Lower leg skin (tissue), 4 donors: ENCODE measurements at regions of chr4 and their contacts with region 1.

Region 1: GRCh38 chr4:188021548-188022249 is 26.1 kb downstream of the ZFP42 start:
- DNase-seq: no peak
- H3K4me3 ChIP-seq: no peak overlapping the region
- CTCF ChIP-seq: no peak
- POLR2A ChIP-seq: no peak

Region 2: DNA sequence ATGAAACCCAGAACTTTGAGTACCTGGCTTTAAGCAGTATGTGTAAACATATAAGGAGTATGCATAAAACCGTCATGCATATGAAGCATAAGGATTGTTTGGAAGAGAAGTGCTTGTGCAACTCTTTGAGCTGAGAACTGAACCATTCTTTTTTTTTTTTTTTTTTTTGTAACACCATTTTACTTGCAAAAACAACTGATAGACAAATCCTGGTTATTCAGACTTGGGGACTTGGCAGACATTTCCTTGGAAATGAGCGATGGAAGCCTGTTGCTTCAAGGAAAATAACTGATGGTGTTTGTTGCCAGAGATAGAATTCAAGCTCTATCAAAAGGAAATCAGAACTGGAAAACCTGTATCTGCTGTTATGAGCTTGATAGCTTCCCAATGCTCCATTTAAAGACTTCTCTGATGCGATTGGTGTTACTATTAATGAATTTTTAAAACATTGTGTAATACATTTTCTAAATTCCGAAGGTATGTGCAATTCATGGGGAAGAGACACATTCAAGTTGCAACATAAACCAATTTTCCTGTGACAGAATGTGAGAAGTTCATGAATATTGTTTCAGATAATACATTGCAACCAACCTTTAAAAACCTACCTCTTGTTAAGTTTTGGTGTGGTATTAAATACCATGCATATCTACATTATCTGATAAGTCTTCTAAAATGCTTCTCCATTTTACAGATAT is 1251.1 kb before region 1 on chr4:
- intact Hi-C with region 1: no loop called
- DNase-seq: no peak
- H3K4me3 ChIP-seq: no peak overlapping the region
- CTCF ChIP-seq: no peak
- POLR2A ChIP-seq: no peak

Region 3: GRCh38 chr4:188127214-188127874 is 105.6 kb after region 1 on chr4:
- intact Hi-C with region 1: no loop called
- DNase-seq: no peak
- H3K4me3 ChIP-seq: no peak overlapping the region
- CTCF ChIP-seq: no peak
- POLR2A ChIP-seq: no peak

Region 4: GRCh38 chr4:188400451-188400850 is 378.8 kb after region 1 on chr4:
- intact Hi-C with region 1: no loop called
- DNase-seq: no peak
- H3K4me3 ChIP-seq: no peak overlapping the region
- CTCF ChIP-seq: no peak
- POLR2A ChIP-seq: no peak

Region 5: DNA sequence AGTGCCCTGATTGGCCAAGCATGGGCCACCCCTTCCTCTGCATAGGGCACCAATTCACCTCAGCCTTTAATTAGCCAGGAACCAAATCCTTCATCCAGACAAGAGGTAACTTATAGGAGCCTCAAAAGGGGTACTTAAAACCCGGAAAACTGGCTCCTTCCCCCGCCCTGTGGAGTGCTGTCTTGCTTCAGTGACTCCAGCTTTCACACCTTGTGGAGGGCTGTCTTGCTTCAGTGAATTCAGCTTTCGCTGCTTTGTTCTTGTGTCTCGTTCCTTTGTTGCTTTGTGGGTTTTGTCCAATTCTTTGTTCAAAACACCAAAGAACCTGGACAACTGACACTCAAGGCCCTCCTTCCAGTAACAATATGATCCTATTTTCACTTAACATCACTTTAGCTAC is 1836.7 kb after region 1 on chr4:
- intact Hi-C with region 1: loop called (anchors 10 kb)
- DNase-seq: no peak
- H3K4me3 ChIP-seq: no peak overlapping the region
- CTCF ChIP-seq: no peak
- POLR2A ChIP-seq: no peak

Region 6: GRCh38 chr4:189870470-189871234 is 1849.0 kb after region 1 on chr4:
- intact Hi-C with region 1: loop called (anchors 5 kb)
- DNase-seq: no peak
- H3K4me3 ChIP-seq: no peak overlapping the region
- CTCF ChIP-seq: no peak
- POLR2A ChIP-seq: no peak